Astrocyte of the cerebellum (primary cell): ENCODE measurements at regions of chr2 and their contacts with region 1.

Region 1: DNA sequence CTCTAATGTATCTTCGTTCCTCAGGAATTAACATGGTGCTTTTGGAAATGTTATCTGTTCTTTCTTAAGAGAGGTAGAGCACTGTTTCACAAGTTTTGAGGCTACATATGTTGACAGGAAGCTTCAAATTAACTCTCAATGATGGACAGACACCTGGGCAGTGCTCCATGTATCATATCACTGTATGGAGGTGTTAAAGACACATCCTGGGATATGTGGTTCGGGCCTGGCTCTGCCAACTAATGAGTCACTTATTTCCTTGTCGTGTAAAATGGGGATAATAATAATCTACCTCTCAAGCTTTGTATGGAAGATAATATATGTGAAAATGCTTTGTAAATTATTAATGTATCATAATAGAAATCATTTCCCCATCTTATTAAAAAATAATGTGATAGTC is 90.2 kb downstream of the PARD3B start:
- DNase-seq: no peak
- H3K4me3 ChIP-seq: no peak overlapping the region
- CTCF ChIP-seq: no peak

Region 2: DNA sequence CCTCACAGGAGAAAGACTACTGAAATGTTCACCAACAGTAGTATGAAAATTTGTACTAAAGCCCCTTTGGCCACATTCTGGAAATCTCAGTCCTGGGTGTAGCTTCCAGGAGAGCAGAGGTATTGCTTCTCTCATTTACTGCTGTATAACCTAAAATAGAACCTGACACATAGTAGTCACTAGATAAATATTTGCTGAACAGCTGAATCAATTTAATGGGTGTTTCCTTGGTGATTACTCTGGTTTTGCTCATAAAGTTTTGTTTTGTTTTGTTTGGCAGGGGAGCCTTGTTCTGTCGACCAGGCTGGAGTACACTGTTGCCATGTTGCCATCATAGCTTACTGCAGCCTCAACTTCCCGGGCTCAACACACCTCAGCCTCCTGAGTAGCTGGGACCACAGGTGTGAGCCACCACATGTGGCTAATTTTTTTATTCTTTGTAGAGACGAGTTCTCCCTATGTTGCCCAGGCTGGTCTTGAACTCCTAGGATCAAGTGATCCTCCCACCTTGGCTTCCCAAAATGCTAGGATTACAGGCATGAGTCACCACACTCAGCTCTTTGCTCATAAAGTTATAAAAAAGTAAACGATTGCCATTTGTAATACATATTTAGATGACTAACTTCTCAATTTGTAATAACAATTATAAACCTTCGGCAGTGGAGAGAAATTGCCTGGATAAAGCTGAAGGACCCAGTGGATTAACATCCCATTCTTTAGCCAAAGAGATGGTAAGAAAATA is 101.7 kb before region 1 on chr2:
- in situ Hi-C with region 1: loop called (anchors 5 kb)
- DNase-seq: no peak
- H3K4me3 ChIP-seq: no peak overlapping the region
- CTCF ChIP-seq: no peak